Right cardiac atrium (tissue), 5 donors: ENCODE measurements at regions of chr11 and their contacts with region 1.

Region 1: DNA sequence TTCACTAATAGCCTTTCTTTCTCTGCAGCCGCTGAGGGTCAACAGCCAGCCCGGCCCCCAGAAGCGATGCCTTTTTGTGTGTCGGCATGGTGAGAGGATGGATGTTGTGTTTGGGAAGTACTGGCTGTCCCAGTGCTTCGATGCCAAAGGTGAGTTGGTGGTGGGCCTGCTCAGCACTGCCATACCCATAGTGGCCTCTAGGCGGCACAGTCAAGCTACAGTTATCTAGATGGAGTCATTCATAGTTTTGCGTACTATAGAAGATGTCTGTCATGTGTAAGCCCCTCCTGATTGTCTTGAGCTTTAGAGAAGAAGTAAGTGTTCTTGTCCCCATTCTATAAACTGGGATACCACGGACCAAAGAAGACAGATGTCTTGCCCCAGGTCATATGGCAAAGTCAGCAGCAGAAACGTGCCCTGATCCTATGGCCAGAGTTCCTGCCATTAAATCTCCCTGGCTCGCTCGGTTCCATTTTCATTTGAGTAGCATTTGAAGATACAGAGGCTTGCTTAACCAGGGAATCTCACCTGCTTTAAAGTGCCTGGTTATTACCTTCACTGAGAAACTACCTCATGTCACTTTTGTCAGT is 42.1 kb upstream of the CRTAM start:
- DNase-seq: peak; percentile 29 to 70 (median 63)
- ATAC-seq: peak in 1 of 2 donors; percentile 57
- H3K4me3 ChIP-seq: no peak overlapping the region
- H3K27ac ChIP-seq: no peak overlapping the region
- H3K4me1 ChIP-seq: no peaks in the 10 kb centered on the region
- H3K27me3 ChIP-seq: no peaks in the 10 kb centered on the region

Region 2: GRCh38 chr11:122843281-122844141 is 47.3 kb after region 1 on chr11:
- intact Hi-C with region 1: loop called in 1 of 4 experiments (anchors 10 kb)
- DNase-seq: no peak
- ATAC-seq: no peak
- H3K4me3 ChIP-seq: no peak overlapping the region
- H3K27ac ChIP-seq: no peak overlapping the region
- H3K4me1 ChIP-seq: no peaks in the 10 kb centered on the region
- H3K27me3 ChIP-seq: no peaks in the 10 kb centered on the region

Region 3: DNA sequence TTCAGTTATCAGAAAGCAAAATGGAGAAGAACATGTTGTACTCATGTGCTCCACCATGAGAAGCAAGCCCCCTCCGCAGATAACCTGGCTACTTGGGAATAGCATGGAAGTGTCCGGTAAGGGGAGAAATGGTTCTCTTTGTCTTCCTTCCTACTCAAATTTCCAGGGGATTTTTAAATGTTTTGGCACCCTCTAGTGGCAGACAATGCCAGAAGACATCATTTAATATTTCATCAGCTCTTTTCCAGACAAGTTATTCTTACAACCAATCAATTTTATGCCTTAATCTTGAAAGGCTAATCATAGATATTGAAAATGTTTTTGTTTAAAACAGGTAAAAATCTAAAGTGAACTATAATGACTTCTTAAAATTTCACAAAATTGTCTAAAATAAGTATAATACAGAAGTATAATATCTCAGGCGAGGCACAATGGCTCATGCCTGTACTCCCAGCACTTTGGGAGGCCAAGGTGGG is 57.8 kb after region 1 on chr11:
- intact Hi-C with region 1: loop called in 3 of 4 experiments (anchors 2 to 10 kb)
- DNase-seq: no peak
- ATAC-seq: no peak
- H3K4me3 ChIP-seq: no peak overlapping the region
- H3K27ac ChIP-seq: no peak overlapping the region
- H3K4me1 ChIP-seq: no peaks in the 10 kb centered on the region
- H3K27me3 ChIP-seq: peaks cover under 1% of the 10 kb centered on the region

Region 4: GRCh38 chr11:122874991-122875390 is 78.8 kb after region 1 on chr11:
- intact Hi-C with region 1: no loop called
- DNase-seq: no peak
- ATAC-seq: no peak
- H3K4me3 ChIP-seq: no peak overlapping the region
- H3K27ac ChIP-seq: no peak overlapping the region
- H3K4me1 ChIP-seq: no peaks in the 10 kb centered on the region
- H3K27me3 ChIP-seq: no peaks in the 10 kb centered on the region